H1 (cell line): ENCODE measurements at regions of chr5 and their contacts with region 1.

Region 1: GRCh38 chr5:54457094-54457862 is 1.8 kb downstream of the HSPB3 start:
- DNase-seq: no peak
- H3K4me3 ChIP-seq: no peak overlapping the region
- H3K27ac ChIP-seq: no peak overlapping the region
- H3K4me1 ChIP-seq: peaks cover 0 to 5% (median 3%) of the 10 kb centered on the region in 4 experiments; a peak in 5 of 7 replicates
- H3K27me3 ChIP-seq: no peaks in the 10 kb centered on the region
- CTCF ChIP-seq: no peak
- EP300 ChIP-seq: no peak
- POLR2A ChIP-seq: no peak
- RAD21 ChIP-seq: no peak

Region 2: GRCh38 chr5:54325610-54326311 is 131.5 kb before region 1 on chr5:
- CTCF ChIA-PET with region 1: no interaction called
- POLR2A ChIA-PET with region 1: no interaction called
- DNase-seq: no peak
- H3K4me3 ChIP-seq: no peak overlapping the region
- H3K27ac ChIP-seq: no peak overlapping the region
- H3K4me1 ChIP-seq: peaks cover 0 to 3% (median 0%) of the 10 kb centered on the region in 4 experiments; a peak in 3 of 7 replicates
- H3K27me3 ChIP-seq: no peaks in the 10 kb centered on the region
- CTCF ChIP-seq: no peak
- EP300 ChIP-seq: no peak
- POLR2A ChIP-seq: no peak
- RAD21 ChIP-seq: no peak

Region 3: DNA sequence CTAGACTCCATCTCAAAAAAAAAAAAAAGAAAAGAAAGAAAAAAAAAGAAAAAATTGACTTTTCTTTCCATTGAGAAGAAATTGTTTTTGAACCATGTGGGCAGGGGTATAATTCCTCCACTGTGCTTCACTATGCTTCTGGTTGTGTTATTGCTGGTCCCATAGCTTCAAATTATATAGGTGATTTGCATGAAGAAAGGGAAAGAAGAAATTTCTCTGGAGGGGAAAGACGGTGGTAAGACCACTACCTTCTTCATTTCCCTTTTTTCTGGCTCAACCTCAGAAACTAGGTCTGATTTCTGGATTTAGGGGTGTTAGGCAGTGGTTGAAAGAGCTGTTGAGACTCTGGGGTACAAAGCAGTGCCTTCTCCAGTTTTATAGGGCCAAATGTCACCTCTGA is 31.1 kb before region 1 on chr5:
- CTCF ChIA-PET with region 1: no interaction called
- POLR2A ChIA-PET with region 1: no interaction called
- DNase-seq: no peak
- H3K4me3 ChIP-seq: no peak overlapping the region
- H3K27ac ChIP-seq: no peak overlapping the region
- H3K4me1 ChIP-seq: no peaks in the 10 kb centered on the region
- H3K27me3 ChIP-seq: no peaks in the 10 kb centered on the region
- CTCF ChIP-seq: no peak
- EP300 ChIP-seq: no peak
- POLR2A ChIP-seq: no peak
- RAD21 ChIP-seq: no peak

Region 4: GRCh38 chr5:54443270-54443669 is 14.0 kb before region 1 on chr5:
- CTCF ChIA-PET with region 1: interaction called, 38 read pairs
- POLR2A ChIA-PET with region 1: no interaction called
- DNase-seq: no peak
- H3K4me3 ChIP-seq: no peak overlapping the region
- H3K27ac ChIP-seq: no peak overlapping the region
- H3K4me1 ChIP-seq: no peaks in the 10 kb centered on the region
- H3K27me3 ChIP-seq: no peaks in the 10 kb centered on the region
- CTCF ChIP-seq: peak in 2 of 3 experiments; percentile 47 to 58; a peak in 2 of 4 replicates
- EP300 ChIP-seq: no peak
- POLR2A ChIP-seq: no peak
- RAD21 ChIP-seq: peak; percentile 49 to 55

Region 5: GRCh38 chr5:54646356-54647101 is 189.3 kb after region 1 on chr5:
- CTCF ChIA-PET with region 1: no interaction called
- POLR2A ChIA-PET with region 1: no interaction called
- DNase-seq: peak; percentile 15 to 46
- H3K4me3 ChIP-seq: no peak overlapping the region
- H3K27ac ChIP-seq: no peak overlapping the region
- H3K4me1 ChIP-seq: peaks cover 0 to 4% (median 2%) of the 10 kb centered on the region in 4 experiments; a peak in 3 of 7 replicates
- H3K27me3 ChIP-seq: no peaks in the 10 kb centered on the region
- CTCF ChIP-seq: no peak
- EP300 ChIP-seq: no peak
- POLR2A ChIP-seq: no peak
- RAD21 ChIP-seq: no peak